Calu3 (cell line): ENCODE measurements at regions of chr12 and their contacts with region 1.

Region 1: DNA sequence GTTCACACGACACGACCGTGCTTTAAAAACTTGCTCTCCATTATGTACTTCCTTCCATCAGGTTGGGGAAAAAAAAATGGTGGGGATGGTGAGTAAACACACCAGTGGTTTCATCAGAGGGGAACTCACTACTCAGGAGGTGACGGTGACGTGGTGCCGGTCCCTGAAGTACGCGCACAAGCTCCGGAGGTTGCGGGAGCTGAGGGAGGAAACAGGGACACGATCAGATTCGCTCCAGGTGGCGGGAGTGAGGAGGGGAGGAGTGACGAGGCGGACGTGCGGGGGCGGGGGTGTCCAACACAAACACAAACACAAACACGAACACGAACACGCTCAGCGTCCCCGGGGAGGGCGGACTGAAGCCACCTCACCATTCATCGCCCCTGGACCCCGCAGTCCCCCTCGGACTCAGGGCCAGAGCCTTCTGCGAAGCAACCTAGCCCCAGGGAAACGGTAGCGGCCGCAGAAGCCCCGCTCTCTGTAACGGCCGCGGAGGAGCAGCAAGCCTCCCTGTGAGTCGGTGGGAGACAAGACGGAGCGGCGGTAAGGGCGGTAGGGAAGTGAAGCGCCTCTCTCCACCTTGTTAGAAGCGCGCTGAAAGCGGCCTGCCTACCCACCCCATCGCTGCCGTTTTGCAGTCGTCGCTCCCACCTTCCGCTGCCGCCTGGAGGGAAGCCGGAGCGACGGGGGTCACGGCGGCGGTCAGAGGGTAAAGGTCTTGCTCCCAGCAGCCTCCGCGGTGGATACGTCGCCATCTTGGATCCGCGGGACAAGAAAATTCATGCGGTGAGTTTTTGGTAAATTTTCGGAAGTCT is at the start of gene CNOT2:
- DNase-seq: peak; percentile 93
- H3K4me3 Mint-ChIP-seq: peak within 1 kb of the TSS; percentile 89
- H3K27ac Mint-ChIP-seq: peak within 1 kb of the TSS; percentile 95
- H3K4me1 Mint-ChIP-seq: peaks cover 41% of the 10 kb centered on the region
- H3K27me3 Mint-ChIP-seq: no peaks in the 10 kb centered on the region
- CTCF ChIP-seq: no peak
- total RNA-seq, gene CNOT2: 117 and 126 TPM in 2 replicates

Region 2: GRCh38 chr12:69900720-69901131 is 342.2 kb before region 1 on chr12:
- CTCF ChIA-PET with region 1: no interaction called
- intact Hi-C with region 1: loop called (anchors 5 kb)
- DNase-seq: peak; percentile 85
- H3K4me3 Mint-ChIP-seq: no peak overlapping the region
- H3K27ac Mint-ChIP-seq: no peak overlapping the region
- H3K4me1 Mint-ChIP-seq: no peaks in the 10 kb centered on the region
- H3K27me3 Mint-ChIP-seq: no peaks in the 10 kb centered on the region
- CTCF ChIP-seq: peak; percentile 92

Region 3: GRCh38 chr12:69985656-69986055 is 257.2 kb before region 1 on chr12:
- CTCF ChIA-PET with region 1: no interaction called
- intact Hi-C with region 1: loop called (anchors 5 kb)
- DNase-seq: peak; percentile 73
- H3K4me3 Mint-ChIP-seq: no peak overlapping the region
- H3K27ac Mint-ChIP-seq: no peak overlapping the region
- H3K4me1 Mint-ChIP-seq: no peaks in the 10 kb centered on the region
- H3K27me3 Mint-ChIP-seq: no peaks in the 10 kb centered on the region
- CTCF ChIP-seq: peak; percentile 70

Region 4: GRCh38 chr12:70815971-70816391 is 573.1 kb after region 1 on chr12:
- CTCF ChIA-PET with region 1: no interaction called
- intact Hi-C with region 1: no loop called
- DNase-seq: no peak
- H3K4me3 Mint-ChIP-seq: no peak overlapping the region
- H3K27ac Mint-ChIP-seq: peak overlapping the region; percentile 45
- H3K4me1 Mint-ChIP-seq: peaks cover 56% of the 10 kb centered on the region
- H3K27me3 Mint-ChIP-seq: no peaks in the 10 kb centered on the region
- CTCF ChIP-seq: no peak